Natural killer cell (primary cell): ENCODE measurements at regions of chr14 and their contacts with region 1.

Region 1: GRCh38 chr14:106738075-106738474 is 1211.7 kb downstream of the TMEM121 start:
- DNase-seq: peak in 1 of 2 donors; percentile 51
- ATAC-seq: no peak
- H3K4me3 ChIP-seq: peak overlapping the region; percentile 65
- H3K4me3 Mint-ChIP-seq: peak overlapping the region; percentile 77
- H3K27ac ChIP-seq: peak overlapping the region; percentile 96
- H3K27ac Mint-ChIP-seq: peak overlapping the region; percentile 69 to 86
- H3K4me1 ChIP-seq: peaks cover 30% of the 10 kb centered on the region
- H3K4me1 Mint-ChIP-seq: peaks cover 14 to 68% of the 10 kb centered on the region in 2 donors
- H3K27me3 ChIP-seq: no peaks in the 10 kb centered on the region
- H3K27me3 Mint-ChIP-seq: no peaks in the 10 kb centered on the region
- CTCF ChIP-seq: peak; percentile 66

Region 2: DNA sequence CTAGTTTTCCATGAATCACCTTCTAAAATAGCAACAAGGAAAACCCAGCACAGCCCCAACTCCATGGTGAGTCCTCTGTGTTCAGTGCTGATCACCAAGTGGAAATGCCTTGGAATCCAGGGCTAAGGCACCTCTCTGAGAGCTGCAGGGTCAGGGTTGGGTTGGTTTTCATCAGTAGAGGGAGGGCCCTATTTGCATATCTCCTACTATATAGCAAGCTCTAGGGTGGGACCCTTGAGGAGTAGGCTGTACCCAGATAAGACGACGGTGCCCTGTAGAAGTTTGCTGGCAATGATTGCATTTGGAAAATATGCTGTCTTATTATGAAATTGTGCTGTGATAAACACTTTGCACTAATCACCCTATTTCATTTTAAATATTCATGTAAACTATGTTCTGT is 199.9 kb before region 1 on chr14:
- intact Hi-C with region 1: no loop called
- DNase-seq: no peak
- ATAC-seq: no peak
- H3K4me3 ChIP-seq: no peak overlapping the region
- H3K4me3 Mint-ChIP-seq: no peak overlapping the region
- H3K27ac ChIP-seq: no peak overlapping the region
- H3K27ac Mint-ChIP-seq: no peak overlapping the region
- H3K4me1 ChIP-seq: no peaks in the 10 kb centered on the region
- H3K4me1 Mint-ChIP-seq: no peaks in the 10 kb centered on the region
- H3K27me3 ChIP-seq: peaks cover 2% of the 10 kb centered on the region
- H3K27me3 Mint-ChIP-seq: peaks cover 16 to 58% of the 10 kb centered on the region in 2 donors
- CTCF ChIP-seq: no peak

Region 3: DNA sequence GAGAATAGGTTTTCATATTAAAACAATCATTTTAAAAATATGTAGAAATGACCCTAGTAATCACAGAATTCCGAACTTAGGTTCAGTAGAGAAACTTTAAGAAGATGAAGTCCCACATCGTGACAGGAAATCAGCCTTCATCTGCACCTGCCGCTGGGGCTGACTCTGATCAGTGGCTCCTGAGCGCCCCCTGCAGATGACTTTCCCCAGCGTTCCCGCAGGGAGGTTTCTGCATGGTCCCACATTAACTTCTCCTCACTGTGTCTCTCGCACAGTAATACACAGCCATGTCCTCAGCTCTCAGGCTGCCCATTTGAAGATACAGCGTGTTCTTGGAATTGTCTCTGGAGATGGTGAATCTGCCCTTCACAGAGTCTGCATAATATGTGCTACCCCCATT is 80.6 kb before region 1 on chr14:
- intact Hi-C with region 1: loop called (anchors 2 kb)
- DNase-seq: peak in 1 of 2 donors; percentile 77
- ATAC-seq: peak in 1 of 3 donors; percentile 31
- H3K4me3 ChIP-seq: no peak overlapping the region
- H3K4me3 Mint-ChIP-seq: no peak overlapping the region
- H3K27ac ChIP-seq: no peak overlapping the region
- H3K27ac Mint-ChIP-seq: no peak overlapping the region
- H3K4me1 ChIP-seq: no peaks in the 10 kb centered on the region
- H3K4me1 Mint-ChIP-seq: peaks cover 32% of the 10 kb centered on the region in 2 donors
- H3K27me3 ChIP-seq: no peaks in the 10 kb centered on the region
- H3K27me3 Mint-ChIP-seq: peaks cover 8 to 22% of the 10 kb centered on the region in 2 donors
- CTCF ChIP-seq: peak; percentile 23